Activated CD8-positive, alpha-beta T cell treated with anti-CD3 and anti-CD28 coated beads, Interleukin-2, amount 10 ng/mL, durations not matched to agents 7 days and 5 days (primary cell): ENCODE measurements at regions of chr16 and their contacts with region 1.

Region 1: DNA sequence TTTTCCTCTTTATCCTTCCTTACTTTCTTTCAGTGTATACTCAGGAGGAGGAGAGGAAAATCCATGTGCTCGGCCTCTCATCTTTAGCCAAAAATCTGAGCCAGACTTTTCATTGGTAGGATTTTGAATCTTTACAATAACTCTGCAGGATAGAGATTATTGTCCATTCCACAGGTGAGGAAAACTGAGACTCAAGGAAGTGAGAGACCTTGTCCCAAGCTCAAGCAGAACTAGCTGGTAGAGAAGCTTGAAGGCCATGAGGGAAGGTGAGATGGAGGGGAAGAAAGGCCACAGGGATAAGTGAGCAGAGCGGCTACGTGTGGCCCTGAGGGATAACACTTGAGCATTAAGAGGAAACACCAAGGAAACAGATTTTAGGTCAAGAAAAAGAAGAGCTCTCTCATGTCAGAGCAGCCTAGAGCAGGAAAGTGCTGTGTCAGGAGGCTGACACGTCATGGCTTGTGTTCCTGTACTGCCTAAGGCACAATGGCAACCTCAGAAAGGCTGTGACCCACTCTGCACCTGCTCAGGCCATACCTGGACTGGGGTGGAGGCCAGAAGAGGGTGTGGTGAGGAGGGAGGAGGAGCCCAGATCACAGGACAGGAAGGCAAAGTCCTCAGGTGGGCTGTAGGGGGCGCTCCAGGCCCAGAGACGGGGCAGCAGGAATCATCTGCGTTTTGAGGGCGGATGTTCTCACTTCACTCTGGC is 11.9 kb downstream of the MT4 start:
- DNase-seq: peak; percentile 93
- ATAC-seq: peak; percentile 100
- H3K4me3 Mint-ChIP-seq: no peak overlapping the region
- H3K27ac Mint-ChIP-seq: peak overlapping the region; percentile 72
- H3K4me1 Mint-ChIP-seq: peaks cover 10% of the 10 kb centered on the region
- H3K27me3 Mint-ChIP-seq: peaks cover 17% of the 10 kb centered on the region

Region 2: GRCh38 chr16:56493815-56494214 is 82.9 kb before region 1 on chr16:
- CTCF ChIA-PET with region 1: no interaction called
- POLR2A ChIA-PET with region 1: no interaction called
- DNase-seq: no peak
- ATAC-seq: no peak
- H3K4me3 Mint-ChIP-seq: no peak overlapping the region
- H3K27ac Mint-ChIP-seq: no peak overlapping the region
- H3K4me1 Mint-ChIP-seq: no peaks in the 10 kb centered on the region
- H3K27me3 Mint-ChIP-seq: no peaks in the 10 kb centered on the region

Region 3: DNA sequence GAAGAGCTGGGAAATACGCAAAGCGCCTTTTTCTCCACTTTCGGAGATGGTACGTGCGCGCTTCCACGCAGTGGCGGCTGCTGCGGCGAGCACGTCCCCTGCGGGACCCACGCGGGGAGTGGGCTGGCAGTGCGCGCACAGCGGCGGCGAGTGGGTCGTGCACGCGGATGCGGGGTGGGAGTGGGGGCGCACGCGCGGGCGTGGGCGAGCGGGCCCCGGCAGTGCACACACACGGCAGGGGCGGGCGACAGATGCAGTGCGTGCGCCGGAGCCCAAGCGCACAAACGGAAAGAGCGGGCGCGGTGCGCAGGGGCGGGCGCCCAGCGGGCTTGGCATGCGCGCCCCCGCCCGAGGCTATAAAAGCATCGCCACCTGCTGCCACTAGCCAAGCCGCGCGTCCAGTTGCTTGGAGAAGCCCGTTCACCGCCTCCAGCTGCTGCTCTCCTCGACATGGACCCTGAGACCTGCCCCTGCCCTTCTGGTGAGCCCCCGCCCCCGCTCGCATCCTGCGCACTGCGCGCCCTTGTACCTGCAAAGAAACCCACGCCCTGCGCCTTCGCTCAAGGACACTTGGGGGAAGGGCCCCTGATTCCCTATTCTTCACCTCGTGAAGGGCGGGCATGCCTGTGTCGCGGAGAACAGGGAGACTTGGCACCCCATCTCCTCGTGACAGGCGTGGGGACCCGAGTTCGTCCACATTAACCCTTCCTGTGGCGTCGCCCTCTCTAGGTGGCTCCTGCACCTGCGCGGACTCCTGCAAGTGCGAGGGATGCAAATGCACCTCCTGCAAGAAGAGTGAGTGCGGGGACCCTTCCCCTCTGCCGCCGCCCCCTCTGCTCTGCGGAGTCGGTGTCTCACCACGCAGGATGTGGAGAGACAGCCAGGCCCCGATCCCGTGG is 12.7 kb after region 1 on chr16 and contains the start of gene MT3:
- CTCF ChIA-PET with region 1: interaction called, 23 read pairs
- POLR2A ChIA-PET with region 1: interaction called, 3 read pairs
- DNase-seq: peak; percentile 39
- ATAC-seq: peak; percentile 85
- H3K4me3 Mint-ChIP-seq: peak within 1 kb of the TSS; percentile 79
- H3K27ac Mint-ChIP-seq: peak within 1 kb of the TSS; percentile 21
- H3K4me1 Mint-ChIP-seq: peaks cover 19% of the 10 kb centered on the region
- H3K27me3 Mint-ChIP-seq: peaks cover 48% of the 10 kb centered on the region
- total RNA-seq, gene MT3: 6.2 to 7.5 TPM

Region 4: GRCh38 chr16:56608043-56608875 is 31.5 kb after region 1 on chr16 and contains the start of gene MT2A:
- CTCF ChIA-PET with region 1: interaction called, 31 read pairs
- POLR2A ChIA-PET with region 1: no interaction called
- DNase-seq: peak; percentile 94
- ATAC-seq: peak; percentile 90
- H3K4me3 Mint-ChIP-seq: peak within 1 kb of the TSS; percentile 93
- H3K27ac Mint-ChIP-seq: peak within 1 kb of the TSS; percentile 87
- H3K4me1 Mint-ChIP-seq: peaks cover 43% of the 10 kb centered on the region
- H3K27me3 Mint-ChIP-seq: no peaks in the 10 kb centered on the region
- total RNA-seq, gene MT2A: 186 to 210 TPM

Region 5: DNA sequence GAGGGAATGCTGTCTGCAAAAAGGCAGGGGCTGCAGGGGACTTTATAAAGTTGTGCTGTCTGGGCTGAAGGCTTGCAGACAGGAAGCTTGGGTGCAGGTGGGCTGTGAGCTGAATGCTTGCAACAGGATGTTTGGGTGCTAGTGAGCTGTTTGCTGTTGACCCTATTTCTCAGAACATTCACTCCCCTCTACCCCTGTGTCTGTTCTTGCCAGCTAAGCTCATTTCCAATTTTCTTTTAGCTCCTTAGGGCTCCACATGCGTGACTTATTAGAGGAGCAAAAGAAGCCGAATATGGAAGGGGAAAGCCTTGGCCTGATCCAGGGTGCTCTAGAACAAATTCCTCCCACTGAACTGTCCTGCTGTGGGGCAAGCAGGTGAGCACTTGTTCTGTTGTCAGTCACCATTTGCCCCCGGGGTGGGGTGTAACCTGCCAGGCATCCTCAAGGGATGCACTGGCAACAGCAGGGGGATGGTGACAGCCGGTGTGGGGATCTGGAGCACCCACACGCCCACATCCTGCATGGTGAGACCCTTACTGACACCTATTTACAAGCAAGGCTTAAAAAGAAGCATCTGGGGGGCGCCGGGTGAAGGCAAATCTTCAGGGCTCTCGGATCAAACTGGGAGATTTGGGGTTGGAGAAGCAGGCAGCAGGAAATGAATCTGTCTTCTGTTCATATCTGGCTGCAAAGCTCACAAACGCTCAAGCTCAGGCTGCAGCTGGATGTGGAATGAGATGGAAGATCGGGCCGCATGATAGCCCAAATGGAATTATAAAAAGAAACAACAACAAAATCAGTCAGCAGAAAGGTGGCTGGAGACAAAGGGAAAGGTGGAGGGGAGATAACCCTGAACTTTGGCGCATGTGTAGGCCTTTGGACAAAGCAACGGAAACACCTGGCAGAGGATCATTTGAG is 132.0 kb after region 1 on chr16:
- CTCF ChIA-PET with region 1: interaction called, 143 read pairs
- POLR2A ChIA-PET with region 1: no interaction called
- DNase-seq: peak; percentile 72
- ATAC-seq: peak; percentile 85
- H3K4me3 Mint-ChIP-seq: peak overlapping the region; percentile 80
- H3K27ac Mint-ChIP-seq: peak overlapping the region; percentile 93
- H3K4me1 Mint-ChIP-seq: peaks cover 41% of the 10 kb centered on the region
- H3K27me3 Mint-ChIP-seq: no peaks in the 10 kb centered on the region